H1 (cell line): ENCODE measurements at regions of chr11 and their contacts with region 1.

Region 1: DNA sequence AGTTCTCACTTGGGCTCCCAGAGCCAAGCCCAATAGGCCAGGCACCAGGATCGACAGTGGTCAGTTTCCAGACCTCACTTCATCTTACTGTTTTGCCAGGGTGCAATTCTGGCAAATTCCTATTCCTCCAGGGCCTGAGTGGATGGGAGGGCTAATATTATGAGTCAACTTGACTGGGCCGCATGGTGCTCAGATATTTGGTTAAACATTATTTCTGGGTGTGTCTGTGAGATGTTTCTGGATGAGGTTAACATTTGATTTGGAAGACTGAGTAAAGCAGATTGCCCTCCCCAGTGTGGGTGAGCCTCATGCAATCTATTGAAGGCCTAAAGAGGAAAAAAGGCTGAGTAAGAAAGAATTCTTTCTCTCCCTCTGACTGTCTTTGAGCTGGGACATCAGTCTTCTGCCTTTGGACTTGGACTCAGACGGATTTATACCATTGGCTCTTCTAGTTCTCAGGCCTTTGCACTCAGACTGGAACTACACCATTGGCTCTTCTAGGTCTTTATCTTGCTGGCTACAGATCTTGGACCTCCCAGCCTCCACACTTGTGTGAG is 132.9 kb upstream of the ZBED5 start:
- DNase-seq: no peak
- H3K4me3 ChIP-seq: no peak overlapping the region
- H3K27ac ChIP-seq: no peak overlapping the region
- H3K4me1 ChIP-seq: peaks cover 0 to 2% (median 1%) of the 10 kb centered on the region in 4 experiments; a peak in 1 of 7 replicates
- H3K27me3 ChIP-seq: no peaks in the 10 kb centered on the region
- CTCF ChIP-seq: no peak
- EP300 ChIP-seq: no peak
- POLR2A ChIP-seq: no peak
- RAD21 ChIP-seq: no peak

Region 2: GRCh38 chr11:10750838-10751580 is 239.7 kb before region 1 on chr11 and contains the start of gene CTR9:
- CTCF ChIA-PET with region 1: no interaction called
- POLR2A ChIA-PET with region 1: no interaction called
- DNase-seq: peak; percentile 77 to 95
- H3K4me3 ChIP-seq: peak within 1 kb of the TSS; percentile 75 to 91 (median 80)
- H3K27ac ChIP-seq: peak within 1 kb of the TSS; percentile 79; the same call in 1 of the 2 replicates
- H3K4me1 ChIP-seq: peaks cover 0 to 4% (median 1%) of the 10 kb centered on the region in 4 experiments; a peak in 2 of 7 replicates
- H3K27me3 ChIP-seq: no peaks in the 10 kb centered on the region
- CTCF ChIP-seq: peak in 1 of 3 experiments; percentile 9; a peak in 1 of 4 replicates
- EP300 ChIP-seq: no peak
- POLR2A ChIP-seq: peak; percentile 32 to 94
- RAD21 ChIP-seq: peak in 1 of 2 experiments; percentile 18; a peak in 1 of 4 replicates
- total RNA-seq, gene CTR9: 37.7 and 37.8 TPM in 2 replicates

Region 3: GRCh38 chr11:10955616-10956015 is 35.1 kb before region 1 on chr11:
- CTCF ChIA-PET with region 1: no interaction called
- POLR2A ChIA-PET with region 1: no interaction called
- DNase-seq: no peak
- H3K4me3 ChIP-seq: no peak overlapping the region
- H3K27ac ChIP-seq: no peak overlapping the region
- H3K4me1 ChIP-seq: no peaks in the 10 kb centered on the region
- H3K27me3 ChIP-seq: no peaks in the 10 kb centered on the region
- CTCF ChIP-seq: no peak
- EP300 ChIP-seq: no peak
- POLR2A ChIP-seq: no peak
- RAD21 ChIP-seq: no peak

Region 4: DNA sequence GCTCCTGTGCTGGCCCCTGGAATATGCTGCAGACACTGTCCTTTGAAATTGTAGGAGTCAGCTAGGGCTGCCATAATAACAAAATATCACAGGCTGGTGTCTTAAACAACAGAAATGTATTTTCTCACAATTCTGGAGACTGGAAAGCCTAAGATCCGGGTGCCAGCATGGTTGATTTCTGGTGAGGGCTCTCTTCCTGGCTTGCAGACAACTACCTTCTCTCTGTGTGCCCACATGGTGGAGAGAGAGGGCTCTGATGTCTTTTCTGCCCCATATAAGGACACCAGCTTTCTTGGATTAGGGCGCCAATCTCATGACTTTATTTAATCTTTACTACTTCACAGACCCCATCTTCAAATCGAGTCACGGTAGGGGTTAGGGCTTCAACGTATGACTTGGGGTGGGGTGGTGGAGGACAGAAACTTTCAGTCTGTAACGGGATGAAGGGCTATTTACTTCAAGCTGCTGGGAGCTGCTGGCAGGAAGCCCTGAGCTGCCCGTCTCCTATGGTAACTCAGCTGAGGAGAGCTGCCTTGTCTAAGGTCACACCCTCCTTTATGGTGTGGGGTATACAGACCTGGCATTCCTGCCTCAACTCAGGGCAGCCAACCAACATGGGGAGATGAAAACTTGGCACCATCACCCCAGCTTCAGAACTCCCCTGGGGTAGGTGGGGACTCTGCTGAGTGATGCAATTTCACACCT is 10.0 kb after region 1 on chr11:
- CTCF ChIA-PET with region 1: interaction called, 18 read pairs
- POLR2A ChIA-PET with region 1: interaction called, 4 read pairs
- DNase-seq: no peak
- H3K4me3 ChIP-seq: no peak overlapping the region
- H3K27ac ChIP-seq: no peak overlapping the region
- H3K4me1 ChIP-seq: no peaks in the 10 kb centered on the region
- H3K27me3 ChIP-seq: no peaks in the 10 kb centered on the region; a peak in 1 of 7 replicates
- CTCF ChIP-seq: no peak
- EP300 ChIP-seq: no peak
- POLR2A ChIP-seq: no peak
- RAD21 ChIP-seq: no peak